CD4-positive, alpha-beta T cell (primary cell): ENCODE measurements at regions of chr16 and their contacts with region 1.

Region 1: GRCh38 chr16:8621572-8622314 is at the start of gene METTL22:
- DNase-seq: peak; percentile 83 to 97 (median 90)
- ATAC-seq: peak; percentile 98
- H3K4me3 ChIP-seq: peak within 1 kb of the TSS; percentile 100
- H3K4me3 Mint-ChIP-seq: peak within 1 kb of the TSS; percentile 94
- H3K27ac ChIP-seq: peak within 1 kb of the TSS; percentile 33 to 72
- H3K27ac Mint-ChIP-seq: peak within 1 kb of the TSS; percentile 84
- H3K4me1 ChIP-seq: peaks cover 20% of the 10 kb centered on the region
- H3K4me1 Mint-ChIP-seq: peaks cover 22% of the 10 kb centered on the region
- H3K27me3 ChIP-seq: no peaks in the 10 kb centered on the region
- H3K27me3 Mint-ChIP-seq: peaks cover 10% of the 10 kb centered on the region
- CTCF ChIP-seq: no peak
- total RNA-seq, gene METTL22: 23.2 to 26.5 TPM

Region 2: GRCh38 chr16:7964167-7964566 is 657.6 kb before region 1 on chr16:
- CTCF ChIA-PET with region 1: no interaction called
- POLR2A ChIA-PET with region 1: no interaction called
- intact Hi-C with region 1: no loop called
- DNase-seq: no peak
- ATAC-seq: no peak
- H3K4me3 ChIP-seq: no peak overlapping the region
- H3K4me3 Mint-ChIP-seq: no peak overlapping the region
- H3K27ac ChIP-seq: no peak overlapping the region
- H3K27ac Mint-ChIP-seq: no peak overlapping the region
- H3K4me1 ChIP-seq: no peaks in the 10 kb centered on the region
- H3K4me1 Mint-ChIP-seq: no peaks in the 10 kb centered on the region
- H3K27me3 ChIP-seq: no peaks in the 10 kb centered on the region
- H3K27me3 Mint-ChIP-seq: no peaks in the 10 kb centered on the region
- CTCF ChIP-seq: no peak

Region 3: GRCh38 chr16:8278181-8278580 is 343.6 kb before region 1 on chr16:
- CTCF ChIA-PET with region 1: no interaction called
- POLR2A ChIA-PET with region 1: no interaction called
- intact Hi-C with region 1: no loop called
- DNase-seq: no peak
- ATAC-seq: no peak
- H3K4me3 ChIP-seq: no peak overlapping the region
- H3K4me3 Mint-ChIP-seq: no peak overlapping the region
- H3K27ac ChIP-seq: no peak overlapping the region
- H3K27ac Mint-ChIP-seq: no peak overlapping the region
- H3K4me1 ChIP-seq: no peaks in the 10 kb centered on the region
- H3K4me1 Mint-ChIP-seq: no peaks in the 10 kb centered on the region
- H3K27me3 ChIP-seq: no peaks in the 10 kb centered on the region
- H3K27me3 Mint-ChIP-seq: peaks cover 4% of the 10 kb centered on the region
- CTCF ChIP-seq: no peak

Region 4: GRCh38 chr16:8594149-8594666 is 27.5 kb before region 1 on chr16:
- CTCF ChIA-PET with region 1: no interaction called
- POLR2A ChIA-PET with region 1: no interaction called
- intact Hi-C with region 1: no loop called
- DNase-seq: no peak
- ATAC-seq: no peak
- H3K4me3 ChIP-seq: no peak overlapping the region
- H3K4me3 Mint-ChIP-seq: no peak overlapping the region
- H3K27ac ChIP-seq: no peak overlapping the region
- H3K27ac Mint-ChIP-seq: no peak overlapping the region
- H3K4me1 ChIP-seq: peaks cover 8% of the 10 kb centered on the region
- H3K4me1 Mint-ChIP-seq: peaks cover 4% of the 10 kb centered on the region
- H3K27me3 ChIP-seq: peaks cover 24 to 29% of the 10 kb centered on the region in 2 experiments
- H3K27me3 Mint-ChIP-seq: peaks cover 1% of the 10 kb centered on the region
- CTCF ChIP-seq: no peak

Region 5: GRCh38 chr16:8634991-8635736 is 13.4 kb after region 1 on chr16:
- CTCF ChIA-PET with region 1: no interaction called
- POLR2A ChIA-PET with region 1: no interaction called
- intact Hi-C with region 1: no loop called
- DNase-seq: no peak
- ATAC-seq: no peak
- H3K4me3 ChIP-seq: no peak overlapping the region
- H3K4me3 Mint-ChIP-seq: no peak overlapping the region
- H3K27ac ChIP-seq: no peak overlapping the region
- H3K27ac Mint-ChIP-seq: no peak overlapping the region
- H3K4me1 ChIP-seq: peaks cover 3% of the 10 kb centered on the region
- H3K4me1 Mint-ChIP-seq: no peaks in the 10 kb centered on the region
- H3K27me3 ChIP-seq: no peaks in the 10 kb centered on the region
- H3K27me3 Mint-ChIP-seq: no peaks in the 10 kb centered on the region
- CTCF ChIP-seq: no peak

Region 6: GRCh38 chr16:8674413-8675022 is 52.8 kb after region 1 on chr16 and contains the start of gene ABAT:
- CTCF ChIA-PET with region 1: no interaction called
- POLR2A ChIA-PET with region 1: no interaction called
- intact Hi-C with region 1: loop called in 1 of 2 experiments (anchors 2 kb)
- DNase-seq: peak; percentile 78 to 93 (median 86)
- ATAC-seq: peak; percentile 96
- H3K4me3 ChIP-seq: peak within 1 kb of the TSS; percentile 92
- H3K4me3 Mint-ChIP-seq: peak within 1 kb of the TSS; percentile 97
- H3K27ac ChIP-seq: peak within 1 kb of the TSS in 1 of 2 donors; percentile 46
- H3K27ac Mint-ChIP-seq: peak within 1 kb of the TSS; percentile 91
- H3K4me1 ChIP-seq: peaks cover 25% of the 10 kb centered on the region
- H3K4me1 Mint-ChIP-seq: peaks cover 24% of the 10 kb centered on the region
- H3K27me3 ChIP-seq: no peaks in the 10 kb centered on the region
- H3K27me3 Mint-ChIP-seq: no peaks in the 10 kb centered on the region
- CTCF ChIP-seq: no peak
- total RNA-seq, gene ABAT: 4.1 to 4.4 TPM